KBM-7 (cell line): ENCODE measurements at regions of chr16 and their contacts with region 1.

Region 1: GRCh38 chr16:68902008-68902968 is 59.0 kb downstream of the TANGO6 start:
- DNase-seq: peak; percentile 79

Region 2: DNA sequence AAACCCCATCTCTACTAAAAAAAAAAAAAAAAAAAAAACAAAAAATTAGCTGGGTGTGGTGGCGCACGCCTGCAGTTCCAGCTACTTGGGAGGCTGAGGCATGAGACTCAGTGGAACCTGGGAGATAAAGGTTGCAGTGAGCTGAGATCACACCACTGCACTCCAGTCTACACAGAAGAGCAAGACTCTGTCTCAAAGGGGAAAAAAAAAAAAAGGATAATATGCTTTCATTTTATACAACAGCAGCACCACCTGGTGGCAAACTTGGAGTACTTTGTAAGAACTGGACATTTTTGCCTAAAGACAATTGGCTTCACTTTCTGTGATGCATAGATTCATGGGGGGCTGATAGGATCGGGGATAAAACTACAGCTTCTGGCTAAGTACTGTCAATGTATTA is 221.6 kb after region 1 on chr16:
- in situ Hi-C with region 1: loop called (anchors 25 kb)
- DNase-seq: peak; percentile 68

Region 3: DNA sequence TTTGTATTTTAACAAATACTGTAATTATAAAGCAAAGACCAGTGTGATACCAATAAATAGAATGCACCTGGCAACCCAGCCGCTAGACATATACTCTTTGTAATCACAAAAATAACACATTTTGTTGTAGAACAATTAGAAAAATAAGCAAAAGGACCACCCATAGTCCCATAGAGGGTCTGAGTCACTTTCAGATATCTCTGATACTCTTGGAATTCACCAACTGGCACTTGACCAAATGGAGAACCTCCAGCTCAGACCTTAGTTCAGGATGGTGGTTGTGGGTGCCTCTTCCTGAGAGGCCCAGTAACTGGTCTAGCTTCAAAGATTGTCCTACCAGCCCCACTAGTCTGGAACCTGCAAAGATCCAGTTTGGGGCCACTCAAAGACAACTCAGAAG is 484.3 kb after region 1 on chr16:
- in situ Hi-C with region 1: no loop called
- DNase-seq: no peak

Region 4: GRCh38 chr16:69443927-69444631 is 541.8 kb after region 1 on chr16:
- in situ Hi-C with region 1: no loop called
- DNase-seq: no peak